ENCODE measurements at regions of chr16 and their contacts with region 1.

Region 1: GRCh38 chr16:29995911-29996772 is at the start of gene INO80E:
- DNase-seq: peak; percentile 99
- H3K4me3 ChIP-seq: peak within 1 kb of the TSS; percentile 74 to 96 (median 80)
- H3K27ac ChIP-seq: peak within 1 kb of the TSS; percentile 95 to 98 (median 95)
- H3K4me1 ChIP-seq: peaks cover 0 to 34% (median 25%) of the 10 kb centered on the region in 4 donors
- H3K27me3 ChIP-seq: no peaks in the 10 kb centered on the region
- CTCF ChIP-seq: no peak
- EP300 ChIP-seq: peak in 1 of 4 donors; percentile 28
- POLR2A ChIP-seq: peak; percentile 8 to 28
- total RNA-seq, gene INO80E: 49.2 to 174 (median 54.7) TPM

Region 2: GRCh38 chr16:29961479-29962343 is 34.4 kb before region 1 on chr16 and contains the start of gene TMEM219:
- intact Hi-C with region 1: loop called (anchors 2 kb)
- DNase-seq: peak; percentile 96
- H3K4me3 ChIP-seq: peak within 1 kb of the TSS; percentile 64 to 91 (median 80)
- H3K27ac ChIP-seq: peak within 1 kb of the TSS; percentile 90 to 96 (median 94)
- H3K4me1 ChIP-seq: peaks cover 0 to 18% (median 17%) of the 10 kb centered on the region in 4 donors
- H3K27me3 ChIP-seq: no peaks in the 10 kb centered on the region
- CTCF ChIP-seq: peak; percentile 57 to 78 (median 68)
- EP300 ChIP-seq: no peak
- POLR2A ChIP-seq: peak; percentile 33 to 58
- total RNA-seq, gene TMEM219: 103 to 136 (median 112) TPM

Region 3: DNA sequence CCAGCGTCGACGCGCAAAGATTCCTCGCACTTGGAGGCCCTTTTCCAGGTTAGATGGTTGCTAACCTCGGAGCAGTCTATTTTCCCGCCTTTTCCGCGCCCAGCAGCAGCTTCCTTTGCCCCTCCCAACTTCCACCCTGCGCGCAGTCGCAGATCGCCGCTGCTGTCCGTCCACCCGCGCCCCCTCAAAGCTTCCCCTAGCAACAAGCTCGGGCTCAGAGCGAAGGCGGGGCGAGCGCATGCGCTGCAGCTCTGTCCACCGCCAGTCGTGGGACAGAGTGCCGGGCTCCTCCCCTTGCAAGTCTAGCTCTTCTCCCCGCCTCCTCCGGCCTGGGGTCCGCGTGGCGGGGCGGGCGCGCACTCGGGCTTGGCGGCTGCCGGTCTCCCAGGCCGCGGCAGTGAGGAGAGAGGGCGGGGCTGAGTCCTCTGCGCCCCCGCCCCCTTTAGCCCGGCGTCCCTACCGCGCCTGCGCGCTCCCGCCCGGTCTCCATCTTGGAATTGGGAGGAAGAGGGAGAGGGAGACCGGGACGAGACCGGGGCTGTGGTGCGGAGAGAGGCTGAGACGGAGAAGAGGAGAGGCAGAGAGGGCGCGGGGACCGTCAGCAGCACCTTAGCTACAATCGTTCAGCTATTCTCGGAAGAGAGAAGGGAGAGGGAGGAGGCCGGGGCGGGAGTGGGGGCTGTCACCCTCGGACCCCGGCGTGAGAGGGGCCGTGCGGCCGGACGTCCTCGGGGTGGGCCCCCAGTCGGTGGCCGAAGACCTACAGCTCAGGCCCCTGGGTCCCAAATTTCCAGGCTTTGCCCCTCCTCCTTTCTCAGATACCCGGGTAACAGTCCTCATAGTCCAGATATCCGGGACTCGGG is 22.5 kb before region 1 on chr16 and contains the start of gene TAOK2:
- intact Hi-C with region 1: loop called (anchors 1 kb)
- DNase-seq: peak; percentile 100
- H3K4me3 ChIP-seq: peak within 1 kb of the TSS; percentile 81 to 86 (median 84)
- H3K27ac ChIP-seq: peak within 1 kb of the TSS; percentile 91 to 93 (median 92)
- H3K4me1 ChIP-seq: peaks cover 0 to 34% (median 31%) of the 10 kb centered on the region in 4 donors
- H3K27me3 ChIP-seq: no peaks in the 10 kb centered on the region
- CTCF ChIP-seq: no peak
- EP300 ChIP-seq: no peak
- POLR2A ChIP-seq: peak; percentile 87
- total RNA-seq, gene TAOK2: 26.8 to 38.5 (median 29.7) TPM

Region 4: DNA sequence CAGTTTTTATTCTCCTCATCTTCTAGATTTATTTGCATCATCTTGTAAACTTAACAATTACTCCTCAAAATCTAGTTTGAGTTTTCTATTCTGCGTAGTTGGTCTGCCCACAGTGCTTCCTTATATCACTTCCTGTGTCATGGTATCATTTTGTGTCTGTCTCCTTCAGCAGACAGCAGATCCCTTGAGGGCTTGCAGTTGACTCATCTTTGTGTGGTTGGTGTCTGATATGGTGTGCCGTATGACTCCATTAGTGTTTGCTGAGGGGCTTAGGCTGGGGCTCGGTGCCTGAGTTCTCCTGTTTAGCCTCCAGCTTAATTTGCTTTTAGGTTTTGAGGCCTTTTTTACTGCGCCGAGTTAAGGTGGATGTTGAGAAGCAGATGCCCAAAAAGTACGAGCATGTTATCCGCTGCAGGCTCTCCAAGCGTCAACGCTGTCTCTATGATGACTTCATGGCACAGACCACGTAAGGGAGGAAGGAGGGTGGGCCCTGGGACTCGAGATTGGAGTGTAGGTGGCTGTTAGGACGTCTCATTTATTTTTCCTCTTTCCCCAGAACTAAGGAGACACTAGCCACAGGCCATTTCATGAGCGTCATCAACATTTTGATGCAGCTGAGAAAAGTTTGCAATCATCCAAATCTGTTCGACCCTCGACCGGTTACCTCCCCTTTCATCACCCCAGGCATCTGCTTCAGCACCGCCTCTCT is 719.7 kb after region 1 on chr16:
- intact Hi-C with region 1: no loop called
- DNase-seq: no peak
- H3K4me3 ChIP-seq: no peak overlapping the region
- H3K27ac ChIP-seq: peak overlapping the region in 1 of 4 donors; percentile 11
- H3K4me1 ChIP-seq: peaks cover 0 to 4% (median 0%) of the 10 kb centered on the region in 4 donors
- H3K27me3 ChIP-seq: no peaks in the 10 kb centered on the region
- CTCF ChIP-seq: no peak
- EP300 ChIP-seq: no peak
- POLR2A ChIP-seq: no peak